ENCODE measurements at regions of chr12 and their contacts with region 1.

Region 1: DNA sequence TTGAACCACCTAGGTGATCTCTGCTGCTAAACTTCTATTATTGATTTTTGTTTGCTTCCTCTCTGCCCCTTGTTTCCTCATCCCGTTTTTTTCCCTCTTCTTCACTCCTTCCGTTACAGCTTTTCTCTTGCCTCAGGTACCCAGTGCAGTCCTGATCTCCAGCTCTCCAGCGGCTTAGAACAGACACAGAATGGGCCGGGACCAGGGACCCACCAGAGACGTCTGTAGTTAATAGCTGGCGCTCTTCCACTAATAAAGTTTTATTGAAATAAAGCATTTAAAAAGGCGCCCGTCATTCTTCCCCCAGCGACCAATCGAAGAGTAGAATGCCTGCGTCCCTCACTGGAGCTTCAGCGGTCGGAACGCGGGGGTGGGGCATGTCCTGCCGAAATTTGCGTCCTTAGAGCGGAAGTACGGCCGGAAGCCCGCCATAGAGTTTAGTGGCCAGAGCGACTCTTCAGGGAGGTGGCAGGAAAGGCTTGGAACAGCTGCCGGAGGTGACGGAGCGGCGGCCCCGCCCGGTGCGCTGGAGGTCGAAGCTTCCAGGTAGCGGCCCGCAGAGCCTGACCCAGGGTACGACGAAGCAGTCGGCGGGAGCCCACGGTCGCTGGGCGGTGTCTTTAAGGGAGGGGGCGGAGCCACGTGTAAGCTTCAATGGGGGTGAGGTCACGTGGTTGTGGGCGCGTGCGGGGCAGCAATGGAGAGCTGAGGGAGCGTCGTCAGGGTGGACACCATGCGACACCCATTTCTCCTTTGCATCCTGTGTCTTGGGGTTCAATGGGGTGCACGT is at the start of gene COPS7A:
- DNase-seq: peak; percentile 97
- ATAC-seq: peak; percentile 97
- H3K4me3 ChIP-seq: peak within 1 kb of the TSS; percentile 65 to 93 (median 74)
- H3K27ac ChIP-seq: peak within 1 kb of the TSS; percentile 82
- H3K4me1 ChIP-seq: peaks cover 31% of the 10 kb centered on the region
- H3K27me3 ChIP-seq: no peaks in the 10 kb centered on the region
- CTCF ChIP-seq: peak; percentile 66
- EP300 ChIP-seq: peak in 1 of 2 experiments; percentile 58; a peak in 1 of 4 replicates
- POLR2A ChIP-seq: peak; percentile 68 to 85
- RAD21 ChIP-seq: peak; percentile 36; the same call in 1 of the 2 replicates
- total RNA-seq, gene COPS7A: 38.0 and 40.0 TPM in 2 replicates

Region 2: GRCh38 chr12:5956995-5957394 is 766.8 kb before region 1 on chr12:
- CTCF ChIA-PET with region 1: no interaction called
- POLR2A ChIA-PET with region 1: no interaction called
- in situ Hi-C with region 1: no loop called
- intact Hi-C with region 1: no loop called
- DNase-seq: no peak
- ATAC-seq: no peak
- H3K4me3 ChIP-seq: no peak overlapping the region
- H3K27ac ChIP-seq: no peak overlapping the region
- H3K4me1 ChIP-seq: no peaks in the 10 kb centered on the region
- H3K27me3 ChIP-seq: no peaks in the 10 kb centered on the region
- CTCF ChIP-seq: no peak
- EP300 ChIP-seq: no peak
- POLR2A ChIP-seq: no peak
- RAD21 ChIP-seq: no peak

Region 3: DNA sequence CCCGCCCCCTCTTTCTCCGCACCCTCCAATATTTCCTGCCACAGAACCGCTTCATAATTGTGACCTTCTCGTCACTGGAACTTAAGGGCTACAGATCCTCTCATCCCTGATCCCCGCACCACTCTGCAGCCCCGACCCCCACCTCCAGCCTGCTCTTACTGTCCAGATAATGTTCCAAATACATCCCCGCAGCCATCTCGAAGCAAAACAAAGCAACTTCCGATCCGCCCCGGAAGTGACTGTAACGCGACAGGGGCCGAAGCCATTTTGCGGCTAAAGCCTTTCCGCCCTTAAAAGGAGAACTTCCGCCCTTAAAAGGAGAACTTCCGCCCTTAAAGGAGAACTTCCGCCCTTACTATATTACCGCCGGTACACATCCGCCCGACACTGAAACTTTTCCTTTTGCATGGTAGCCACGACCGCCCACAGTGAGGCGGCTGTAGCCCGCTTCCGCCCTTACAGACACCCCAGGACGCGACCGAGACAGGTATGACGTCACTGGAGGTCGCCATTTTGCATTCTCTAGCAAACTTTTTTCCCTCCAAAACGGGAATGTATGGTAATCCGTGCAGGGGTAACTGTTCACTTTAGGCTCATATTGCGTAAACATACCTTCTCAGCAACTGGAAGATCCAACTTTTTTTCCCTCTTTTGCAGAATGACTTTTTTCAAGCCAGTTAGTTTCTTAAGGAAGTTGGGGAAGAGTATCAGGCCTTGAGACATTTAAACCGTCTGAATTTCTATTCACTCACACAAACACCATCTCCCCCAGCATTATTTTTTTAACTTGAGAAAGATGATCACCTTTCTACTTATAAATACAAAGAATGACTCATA is 60.7 kb before region 1 on chr12 and contains the start of gene ING4:
- CTCF ChIA-PET with region 1: no interaction called
- POLR2A ChIA-PET with region 1: interaction called, 10 read pairs
- in situ Hi-C with region 1: no loop called
- intact Hi-C with region 1: no loop called
- DNase-seq: peak; percentile 99
- ATAC-seq: peak; percentile 99
- H3K4me3 ChIP-seq: peak within 1 kb of the TSS; percentile 77 to 92 (median 87)
- H3K27ac ChIP-seq: peak within 1 kb of the TSS; percentile 72
- H3K4me1 ChIP-seq: peaks cover 18% of the 10 kb centered on the region
- H3K27me3 ChIP-seq: no peaks in the 10 kb centered on the region; a peak in 1 of 5 replicates
- CTCF ChIP-seq: no peak
- EP300 ChIP-seq: peak in 1 of 2 experiments; percentile 39; a peak in 2 of 4 replicates
- POLR2A ChIP-seq: peak; percentile 42 to 52; a peak in 3 of 4 replicates
- RAD21 ChIP-seq: 0 out of 2 replicates have a peak, but pooled peaks have one; percentile 12
- total RNA-seq, gene ING4: 12.7 and 14.4 TPM in 2 replicates

Region 4: GRCh38 chr12:6735448-6736191 is 11.8 kb after region 1 on chr12:
- CTCF ChIA-PET with region 1: no interaction called
- POLR2A ChIA-PET with region 1: interaction called, 10 read pairs
- in situ Hi-C with region 1: no loop called
- intact Hi-C with region 1: no loop called
- DNase-seq: peak; percentile 46
- ATAC-seq: peak; percentile 99
- H3K4me3 ChIP-seq: no peak overlapping the region
- H3K27ac ChIP-seq: peak overlapping the region; percentile 3
- H3K4me1 ChIP-seq: peaks cover 11% of the 10 kb centered on the region
- H3K27me3 ChIP-seq: no peaks in the 10 kb centered on the region
- CTCF ChIP-seq: peak; percentile 84
- EP300 ChIP-seq: no peak
- POLR2A ChIP-seq: no peak
- RAD21 ChIP-seq: peak; percentile 78

Region 5: GRCh38 chr12:6764011-6764828 is 40.4 kb after region 1 on chr12:
- CTCF ChIA-PET with region 1: no interaction called
- POLR2A ChIA-PET with region 1: interaction called, 21 read pairs
- in situ Hi-C with region 1: no loop called
- intact Hi-C with region 1: no loop called
- DNase-seq: peak; percentile 95
- ATAC-seq: peak; percentile 82
- H3K4me3 ChIP-seq: peak overlapping the region; percentile 41 to 72 (median 51)
- H3K27ac ChIP-seq: peak overlapping the region; percentile 54
- H3K4me1 ChIP-seq: peaks cover 77% of the 10 kb centered on the region
- H3K27me3 ChIP-seq: no peaks in the 10 kb centered on the region
- CTCF ChIP-seq: no peak
- EP300 ChIP-seq: peak in 1 of 2 experiments; percentile 82; a peak in 2 of 4 replicates
- POLR2A ChIP-seq: no peak
- RAD21 ChIP-seq: no peak

Region 6: GRCh38 chr12:6792522-6793201 is 68.9 kb after region 1 on chr12:
- CTCF ChIA-PET with region 1: no interaction called
- POLR2A ChIA-PET with region 1: interaction called, 25 read pairs
- in situ Hi-C with region 1: no loop called
- intact Hi-C with region 1: no loop called
- DNase-seq: peak; percentile 87
- ATAC-seq: peak; percentile 97
- H3K4me3 ChIP-seq: peak overlapping the region in 2 of 3 experiments; percentile 27 to 58; a peak in 4 of 6 replicates
- H3K27ac ChIP-seq: peak overlapping the region; percentile 74
- H3K4me1 ChIP-seq: peaks cover 59% of the 10 kb centered on the region
- H3K27me3 ChIP-seq: no peaks in the 10 kb centered on the region; a peak in 1 of 5 replicates
- CTCF ChIP-seq: peak; percentile 31; the same call in 1 of the 2 replicates
- EP300 ChIP-seq: peak in 1 of 2 experiments; percentile 78; a peak in 2 of 4 replicates
- POLR2A ChIP-seq: peak in 1 of 2 experiments; percentile 59; a peak in 2 of 4 replicates
- RAD21 ChIP-seq: no peak

Region 7: DNA sequence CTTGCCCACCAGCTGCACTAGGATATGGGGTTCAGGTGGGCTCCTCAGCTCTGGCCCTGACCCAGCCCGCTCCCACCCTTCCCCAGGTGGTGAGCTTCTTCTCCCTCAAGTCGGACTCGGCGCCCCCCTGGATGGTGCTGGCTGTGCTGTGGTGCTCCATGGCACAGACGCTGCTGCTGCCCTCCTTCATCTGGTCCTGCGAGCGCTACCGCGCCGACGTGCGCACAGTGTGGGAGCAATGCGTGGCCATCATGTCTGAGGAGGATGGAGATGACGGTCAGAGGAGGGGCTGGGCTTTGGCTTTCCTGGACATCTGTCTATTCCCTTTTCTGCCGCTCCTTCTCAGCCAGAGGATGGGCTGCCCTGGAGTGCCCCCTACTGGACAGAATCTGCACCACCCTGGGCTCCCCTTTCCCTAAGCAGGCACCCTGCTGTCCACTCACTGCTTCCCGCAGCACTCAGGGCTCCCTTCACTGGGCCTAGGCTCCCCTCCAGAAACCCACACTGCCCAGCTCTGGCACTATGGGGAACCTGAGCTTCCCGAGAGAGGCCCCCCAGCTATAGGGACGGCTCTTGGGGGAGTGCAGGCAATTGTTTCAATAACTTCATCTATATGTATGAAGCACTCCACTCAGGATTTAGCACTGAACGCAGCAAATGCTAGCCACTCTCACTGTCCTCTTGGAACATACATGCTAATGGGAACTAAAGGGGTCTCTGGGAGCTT is 101.8 kb after region 1 on chr12:
- CTCF ChIA-PET with region 1: no interaction called
- POLR2A ChIA-PET with region 1: interaction called, 16 read pairs
- in situ Hi-C with region 1: no loop called
- intact Hi-C with region 1: no loop called
- DNase-seq: peak; percentile 67
- ATAC-seq: peak; percentile 65
- H3K4me3 ChIP-seq: no peak overlapping the region
- H3K27ac ChIP-seq: no peak overlapping the region
- H3K4me1 ChIP-seq: peaks cover 34% of the 10 kb centered on the region
- H3K27me3 ChIP-seq: peaks cover 2 to 6% of the 10 kb centered on the region in 2 experiments; a peak in 3 of 5 replicates
- CTCF ChIP-seq: peak; percentile 95
- EP300 ChIP-seq: no peak
- POLR2A ChIP-seq: no peak
- RAD21 ChIP-seq: peak; percentile 85

Region 8: DNA sequence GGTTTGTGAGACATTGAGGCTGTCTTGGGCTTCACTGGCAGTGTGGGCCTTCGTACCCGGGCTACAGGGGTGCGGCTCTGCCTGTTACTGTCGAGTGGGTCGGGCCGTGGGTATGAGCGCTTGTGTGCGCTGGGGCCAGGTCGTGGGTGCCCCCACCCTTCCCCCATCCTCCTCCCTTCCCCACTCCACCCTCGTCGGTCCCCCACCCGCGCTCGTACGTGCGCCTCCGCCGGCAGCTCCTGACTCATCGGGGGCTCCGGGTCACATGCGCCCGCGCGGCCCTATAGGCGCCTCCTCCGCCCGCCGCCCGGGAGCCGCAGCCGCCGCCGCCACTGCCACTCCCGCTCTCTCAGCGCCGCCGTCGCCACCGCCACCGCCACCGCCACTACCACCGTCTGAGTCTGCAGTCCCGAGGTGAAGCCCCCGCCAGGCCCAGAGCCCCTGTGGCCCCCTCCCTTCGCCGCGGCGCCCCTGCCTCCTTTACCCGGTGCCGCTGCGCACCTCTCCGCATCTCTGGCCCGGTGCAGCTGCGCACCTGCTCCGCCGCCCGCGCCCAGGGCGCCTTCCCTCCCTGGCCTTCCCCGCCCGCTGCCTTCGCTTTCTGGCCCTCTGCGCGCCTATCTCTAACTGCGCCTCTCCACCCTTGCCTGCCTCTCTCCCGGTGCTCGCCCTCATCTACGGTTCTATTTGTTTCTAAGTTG is 190.6 kb after region 1 on chr12 and contains the start of gene ENO2:
- CTCF ChIA-PET with region 1: no interaction called
- POLR2A ChIA-PET with region 1: no interaction called
- in situ Hi-C with region 1: no loop called
- intact Hi-C with region 1: no loop called
- DNase-seq: peak; percentile 44
- ATAC-seq: peak; percentile 89
- H3K4me3 ChIP-seq: peak within 1 kb of the TSS; percentile 63 to 90 (median 77)
- H3K27ac ChIP-seq: peak within 1 kb of the TSS; percentile 84
- H3K4me1 ChIP-seq: peaks cover 48% of the 10 kb centered on the region
- H3K27me3 ChIP-seq: no peaks in the 10 kb centered on the region
- CTCF ChIP-seq: no peak
- EP300 ChIP-seq: no peak
- POLR2A ChIP-seq: peak in 1 of 2 experiments; percentile 68; a peak in 2 of 4 replicates
- RAD21 ChIP-seq: no peak
- total RNA-seq, gene ENO2: 15.9 and 19.3 TPM in 2 replicates

Measured in HepG2 (cell line).